CD4-positive, alpha-beta T cell (primary cell): ENCODE measurements at regions of chr15 and their contacts with region 1.

Region 1: GRCh38 chr15:58407778-58408177 is 24.0 kb upstream of the LIPC start:
- DNase-seq: no peak
- ATAC-seq: no peak
- H3K4me3 ChIP-seq: no peak overlapping the region
- H3K4me3 Mint-ChIP-seq: peak overlapping the region; percentile 34
- H3K27ac ChIP-seq: no peak overlapping the region
- H3K27ac Mint-ChIP-seq: no peak overlapping the region
- H3K4me1 ChIP-seq: no peaks in the 10 kb centered on the region
- H3K4me1 Mint-ChIP-seq: peaks cover 23% of the 10 kb centered on the region
- H3K27me3 ChIP-seq: no peaks in the 10 kb centered on the region
- H3K27me3 Mint-ChIP-seq: no peaks in the 10 kb centered on the region
- CTCF ChIP-seq: no peak

Region 2: GRCh38 chr15:58393241-58393662 is 14.5 kb before region 1 on chr15:
- CTCF ChIA-PET with region 1: no interaction called
- POLR2A ChIA-PET with region 1: no interaction called
- intact Hi-C with region 1: no loop called
- DNase-seq: no peak
- ATAC-seq: no peak
- H3K4me3 ChIP-seq: no peak overlapping the region
- H3K4me3 Mint-ChIP-seq: no peak overlapping the region
- H3K27ac ChIP-seq: no peak overlapping the region
- H3K27ac Mint-ChIP-seq: no peak overlapping the region
- H3K4me1 ChIP-seq: no peaks in the 10 kb centered on the region
- H3K4me1 Mint-ChIP-seq: no peaks in the 10 kb centered on the region
- H3K27me3 ChIP-seq: no peaks in the 10 kb centered on the region
- H3K27me3 Mint-ChIP-seq: no peaks in the 10 kb centered on the region
- CTCF ChIP-seq: no peak

Region 3: GRCh38 chr15:58472821-58473581 is 65.2 kb after region 1 on chr15:
- CTCF ChIA-PET with region 1: no interaction called
- POLR2A ChIA-PET with region 1: no interaction called
- intact Hi-C with region 1: loop called in 1 of 2 experiments (anchors 2 kb)
- DNase-seq: peak in 9 of 14 experiments; percentile 7 to 88 (median 35)
- ATAC-seq: peak; percentile 88
- H3K4me3 ChIP-seq: peak overlapping the region; percentile 8
- H3K4me3 Mint-ChIP-seq: peak overlapping the region; percentile 28
- H3K27ac ChIP-seq: peak overlapping the region; percentile 10 to 42
- H3K27ac Mint-ChIP-seq: peak overlapping the region; percentile 76
- H3K4me1 ChIP-seq: peaks cover 53% of the 10 kb centered on the region
- H3K4me1 Mint-ChIP-seq: peaks cover 49% of the 10 kb centered on the region
- H3K27me3 ChIP-seq: no peaks in the 10 kb centered on the region
- H3K27me3 Mint-ChIP-seq: no peaks in the 10 kb centered on the region
- CTCF ChIP-seq: no peak